ENCODE measurements at regions of chr3 and their contacts with region 1.

Region 1: GRCh38 chr3:50971487-50971924 is 296.8 kb downstream of the DOCK3 start:
- DNase-seq: peak; percentile 69
- ATAC-seq: peak; percentile 76
- H3K4me3 ChIP-seq: no peak overlapping the region
- H3K4me3 Mint-ChIP-seq: no peak overlapping the region
- H3K27ac ChIP-seq: no peak overlapping the region
- H3K27ac Mint-ChIP-seq: no peak overlapping the region
- H3K4me1 ChIP-seq: no peaks in the 10 kb centered on the region
- H3K4me1 Mint-ChIP-seq: no peaks in the 10 kb centered on the region
- H3K27me3 ChIP-seq: no peaks in the 10 kb centered on the region
- H3K27me3 Mint-ChIP-seq: peaks cover 8% of the 10 kb centered on the region
- CTCF ChIP-seq: peak; percentile 90

Region 2: GRCh38 chr3:51311055-51311454 is 339.5 kb after region 1 on chr3:
- CTCF ChIA-PET with region 1: interaction called, 6 read pairs
- POLR2A ChIA-PET with region 1: no interaction called
- intact Hi-C with region 1: loop called (anchors 5 kb)
- DNase-seq: peak; percentile 32
- ATAC-seq: no peak
- H3K4me3 ChIP-seq: no peak overlapping the region
- H3K4me3 Mint-ChIP-seq: no peak overlapping the region
- H3K27ac ChIP-seq: no peak overlapping the region
- H3K27ac Mint-ChIP-seq: no peak overlapping the region
- H3K4me1 ChIP-seq: no peaks in the 10 kb centered on the region
- H3K4me1 Mint-ChIP-seq: no peaks in the 10 kb centered on the region
- H3K27me3 ChIP-seq: peaks cover 0 to 8% (median 3%) of the 10 kb centered on the region in 4 experiments
- H3K27me3 Mint-ChIP-seq: peaks cover 25% of the 10 kb centered on the region
- CTCF ChIP-seq: peak; percentile 51

Measured in B cell (primary cell).